ENCODE measurements at regions of chr22 and their contacts with region 1.

Region 1: GRCh38 chr22:31749636-31750364 is at the start of gene PRR14L:
- DNase-seq: peak; percentile 100
- ATAC-seq: peak; percentile 95
- total RNA-seq, gene PRR14L: 11.2 TPM

Region 2: DNA sequence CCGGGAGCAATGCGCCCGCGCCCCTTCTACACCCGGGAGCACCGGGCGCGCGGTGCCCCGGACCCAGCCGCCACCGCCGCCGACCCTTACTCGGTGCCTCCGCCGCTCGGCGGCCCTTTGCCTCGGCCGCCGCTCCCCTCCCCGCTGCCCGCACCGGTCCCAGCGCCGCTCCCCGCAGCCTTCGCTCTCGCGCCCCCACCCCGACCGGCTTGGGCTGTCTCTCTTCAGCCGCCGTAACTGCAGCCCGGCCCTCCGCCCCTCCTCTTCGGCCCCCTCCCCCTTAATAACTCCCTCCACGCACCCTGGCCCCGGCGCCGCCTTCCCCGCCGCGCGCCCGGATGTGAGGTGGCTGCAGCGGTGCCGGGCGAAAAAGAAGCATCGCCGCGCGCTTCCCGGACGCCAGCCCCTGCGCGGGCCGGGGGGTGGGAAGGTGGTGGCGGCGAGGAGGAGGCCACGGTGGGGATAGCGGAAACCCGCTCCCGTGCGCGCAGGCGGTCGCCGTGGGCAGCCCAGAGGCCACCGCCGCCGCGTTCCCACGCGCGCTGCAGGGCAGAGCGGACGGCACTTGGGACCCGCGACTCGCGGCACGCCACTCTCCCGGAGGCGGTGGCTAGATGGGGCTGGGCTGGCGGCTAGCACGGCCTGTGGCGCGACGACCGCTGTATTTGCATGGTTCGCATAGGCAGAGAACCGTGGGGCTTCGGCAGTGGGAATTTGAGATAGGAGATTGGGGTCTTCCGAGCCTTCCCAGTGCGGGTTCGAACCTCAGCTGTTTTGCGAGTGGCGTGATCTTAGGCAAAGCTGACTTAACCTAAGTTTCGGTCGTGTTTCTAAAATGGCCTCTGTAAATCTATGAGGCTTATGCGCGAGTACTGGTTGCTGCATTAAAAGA is 259.9 kb before region 1 on chr22 and contains the start of gene EIF4ENIF1:
- intact Hi-C with region 1: loop called (anchors 5 kb)
- DNase-seq: peak; percentile 94
- ATAC-seq: peak; percentile 95
- total RNA-seq, gene EIF4ENIF1: 30.5 TPM

Region 3: DNA sequence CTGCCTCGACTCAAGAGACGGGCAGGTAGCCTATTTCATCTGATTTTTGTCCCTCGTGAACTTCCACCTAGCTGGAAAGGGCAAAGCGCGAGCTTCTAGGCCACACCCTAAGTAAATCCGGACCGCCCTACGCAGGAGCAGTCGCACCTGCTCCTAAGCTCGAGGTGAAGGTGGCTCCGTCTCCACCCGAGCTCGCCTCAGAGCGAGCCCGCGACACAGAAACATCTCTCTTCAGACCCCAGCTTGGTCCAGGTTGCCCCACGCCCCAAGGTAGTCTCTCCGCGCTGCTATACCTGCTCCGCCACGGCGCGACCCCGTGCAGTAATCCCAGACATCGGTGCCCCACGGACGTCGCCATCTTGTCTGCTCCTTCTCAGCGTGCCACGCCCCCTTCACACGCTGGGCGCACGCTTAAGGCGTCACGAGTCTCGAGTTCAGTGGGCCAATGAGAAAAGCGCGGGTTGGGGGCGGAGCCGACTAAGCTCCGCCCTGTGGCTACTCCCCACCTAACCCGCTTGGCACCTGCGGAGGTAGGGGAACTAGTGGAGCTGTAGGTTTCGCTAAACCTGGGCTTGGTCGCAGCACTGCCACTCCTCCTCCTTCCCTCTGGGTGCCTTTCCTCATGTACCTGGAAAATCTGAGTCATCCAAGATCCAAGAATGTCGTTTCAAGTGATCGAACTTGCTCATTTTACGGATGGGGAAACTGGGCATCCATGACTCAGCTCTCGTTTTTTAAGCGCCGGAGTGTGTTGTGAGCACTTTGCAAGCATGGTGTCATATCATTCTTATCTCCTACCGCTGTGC is 87.7 kb before region 1 on chr22 and contains the start of gene PISD:
- intact Hi-C with region 1: loop called (anchors 5 kb)
- DNase-seq: peak; percentile 98
- ATAC-seq: peak; percentile 100
- total RNA-seq, gene PISD: 18.4 TPM

Region 4: DNA sequence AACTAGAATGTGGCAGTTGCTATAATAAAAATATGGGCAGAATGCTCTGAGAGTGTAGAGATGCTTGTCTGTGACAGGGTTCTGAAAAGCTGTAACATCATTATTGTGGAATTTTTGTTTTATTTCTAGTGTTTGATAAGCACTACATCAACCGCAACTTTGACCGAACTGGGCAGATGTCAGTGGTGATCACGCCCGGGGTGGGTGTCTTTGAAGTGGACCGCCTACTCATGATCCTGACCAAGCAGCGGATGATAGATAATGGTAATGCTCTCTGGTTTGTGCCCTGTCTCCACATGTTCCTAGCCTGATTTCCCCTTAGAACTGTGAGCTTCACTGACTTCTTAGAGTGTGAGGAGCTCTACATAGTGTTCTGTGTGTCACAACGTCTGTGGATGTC is 52.8 kb after region 1 on chr22:
- intact Hi-C with region 1: loop called (anchors 10 kb)
- DNase-seq: no peak
- ATAC-seq: no peak

Region 5: DNA sequence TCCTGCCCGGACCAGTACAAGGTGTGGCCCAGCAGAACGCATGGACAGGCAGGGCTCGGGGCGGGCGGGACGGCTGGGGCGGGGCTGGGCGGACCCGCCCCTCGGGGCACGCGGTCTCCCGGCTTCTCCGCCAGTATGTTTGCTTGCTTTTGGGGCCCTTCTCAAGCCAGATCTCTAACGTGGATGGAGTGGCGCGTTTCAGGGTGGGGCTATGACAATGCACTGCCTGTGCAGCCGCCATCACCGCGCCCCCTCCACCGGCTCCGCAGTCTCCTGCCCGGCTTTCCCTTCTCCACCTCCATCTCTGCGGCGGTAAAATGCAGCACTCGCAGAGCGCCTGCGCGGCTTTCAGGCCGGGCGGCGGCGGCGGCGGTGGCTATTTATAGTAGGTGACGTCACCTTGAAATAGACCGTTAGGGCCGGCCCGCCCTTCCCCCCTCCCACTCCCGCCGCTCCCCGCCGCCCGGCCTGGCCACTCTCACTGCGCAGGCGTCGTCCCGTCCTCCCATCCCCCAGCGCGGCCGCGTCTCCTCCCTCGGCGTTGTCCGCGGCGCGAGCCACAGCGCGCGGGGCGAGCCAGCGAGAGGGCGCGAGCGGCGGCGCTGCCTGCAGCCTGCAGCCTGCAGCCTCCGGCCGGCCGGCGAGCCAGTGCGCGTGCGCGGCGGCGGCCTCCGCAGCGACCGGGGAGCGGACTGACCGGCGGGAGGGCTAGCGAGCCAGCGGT is 194.3 kb after region 1 on chr22 and contains the start of gene YWHAH:
- intact Hi-C with region 1: loop called (anchors 5 kb)
- DNase-seq: peak; percentile 98
- ATAC-seq: peak; percentile 96
- total RNA-seq, gene YWHAH: 85.3 TPM